ENCODE measurements at regions of chrX and their contacts with region 1.

Region 1: GRCh38 chrX:21620234-21620633 is 37.9 kb downstream of the KLHL34 start:
- DNase-seq: peak; percentile 36
- ATAC-seq: peak; percentile 56
- H3K4me3 ChIP-seq: no peak overlapping the region
- H3K27ac ChIP-seq: no peak overlapping the region
- H3K4me1 ChIP-seq: peaks cover 27% of the 10 kb centered on the region
- H3K27me3 ChIP-seq: no peaks in the 10 kb centered on the region
- CTCF ChIP-seq: no peak

Region 2: GRCh38 chrX:21509912-21510311 is 110.3 kb before region 1 on chrX:
- CTCF ChIA-PET with region 1: no interaction called
- POLR2A ChIA-PET with region 1: no interaction called
- intact Hi-C with region 1: loop called (anchors 1 kb)
- DNase-seq: peak; percentile 89
- ATAC-seq: peak; percentile 97
- H3K4me3 ChIP-seq: no peak overlapping the region
- H3K27ac ChIP-seq: peak overlapping the region; percentile 73
- H3K4me1 ChIP-seq: peaks cover 23% of the 10 kb centered on the region
- H3K27me3 ChIP-seq: no peaks in the 10 kb centered on the region
- CTCF ChIP-seq: no peak

Region 3: GRCh38 chrX:21528076-21528475 is 92.2 kb before region 1 on chrX:
- CTCF ChIA-PET with region 1: no interaction called
- POLR2A ChIA-PET with region 1: no interaction called
- intact Hi-C with region 1: loop called (anchors 5 kb)
- DNase-seq: peak; percentile 53
- ATAC-seq: peak; percentile 45
- H3K4me3 ChIP-seq: no peak overlapping the region
- H3K27ac ChIP-seq: peak overlapping the region; percentile 52
- H3K4me1 ChIP-seq: peaks cover 27% of the 10 kb centered on the region
- H3K27me3 ChIP-seq: no peaks in the 10 kb centered on the region
- CTCF ChIP-seq: no peak

Region 4: GRCh38 chrX:21725496-21725895 is 105.3 kb after region 1 on chrX:
- CTCF ChIA-PET with region 1: no interaction called
- POLR2A ChIA-PET with region 1: no interaction called
- intact Hi-C with region 1: loop called (anchors 10 kb)
- DNase-seq: peak; percentile 66
- ATAC-seq: peak; percentile 56
- H3K4me3 ChIP-seq: no peak overlapping the region
- H3K27ac ChIP-seq: no peak overlapping the region
- H3K4me1 ChIP-seq: no peaks in the 10 kb centered on the region
- H3K27me3 ChIP-seq: no peaks in the 10 kb centered on the region
- CTCF ChIP-seq: peak; percentile 77

Measured in PC-3 (cell line).